ENCODE measurements at regions of chr19 and their contacts with region 1.

Region 1: DNA sequence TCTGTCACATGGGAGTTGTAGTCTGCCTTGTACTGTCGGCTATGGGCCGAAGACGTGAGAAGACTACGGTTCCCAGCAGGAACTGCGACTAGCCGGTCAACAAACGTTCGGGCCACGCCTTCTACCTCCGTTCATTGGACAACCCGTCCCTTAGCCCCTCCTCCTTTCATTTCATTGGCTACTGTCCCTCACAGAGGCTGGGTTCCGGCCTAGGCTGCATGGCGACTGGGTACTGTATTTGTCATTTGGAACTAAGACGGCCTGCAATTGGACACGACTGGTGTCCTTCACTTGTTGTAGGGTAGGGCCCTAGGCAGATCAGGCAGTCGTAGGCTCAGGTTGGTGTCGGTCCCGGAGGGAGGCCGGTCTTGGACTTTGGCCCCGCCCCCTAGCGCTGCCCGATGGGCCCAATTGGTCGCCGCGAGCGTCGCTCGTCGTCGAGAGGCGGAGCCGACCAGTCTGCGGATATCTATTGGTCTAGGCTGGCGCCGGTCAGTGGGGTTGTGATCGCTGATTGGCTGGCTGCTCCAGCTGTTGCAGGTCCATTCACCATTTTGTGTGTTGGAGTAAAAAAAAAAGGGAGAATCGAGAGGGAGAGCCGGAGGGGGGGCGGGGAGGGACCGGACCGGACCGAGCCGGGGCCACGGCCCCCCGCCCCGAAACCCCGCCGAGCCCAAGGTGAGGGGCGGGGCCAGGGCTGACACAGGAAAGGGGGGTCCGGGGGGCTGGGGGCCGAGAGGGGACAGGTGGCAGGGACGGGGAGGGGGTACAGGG is at the start of gene CIC:
- DNase-seq: peak; percentile 99 to 100
- ATAC-seq: peak; percentile 84 to 93 (median 88)
- H3K4me3 ChIP-seq: peak within 1 kb of the TSS; percentile 38 to 83 (median 66)
- H3K27ac ChIP-seq: peak within 1 kb of the TSS; percentile 90 to 99 (median 98)
- H3K4me1 ChIP-seq: peaks cover 18 to 39% (median 29%) of the 10 kb centered on the region in 9 donors
- H3K27me3 ChIP-seq: no peaks in the 10 kb centered on the region
- CTCF ChIP-seq: no peak
- total RNA-seq, gene CIC: 27.9 to 42.0 (median 32.0) TPM

Region 2: GRCh38 chr19:42254989-42255765 is 13.7 kb before region 1 on chr19 and contains the start of gene ERF:
- intact Hi-C with region 1: loop called in 5 of 10 experiments (anchors 1 to 2 kb)
- DNase-seq: peak; percentile 94 to 96
- ATAC-seq: peak; percentile 79 to 88 (median 82)
- H3K4me3 ChIP-seq: peak within 1 kb of the TSS; percentile 73 to 100 (median 98)
- H3K27ac ChIP-seq: peak within 1 kb of the TSS; percentile 96 to 100 (median 98)
- H3K4me1 ChIP-seq: peaks cover 22 to 50% (median 41%) of the 10 kb centered on the region in 9 donors
- H3K27me3 ChIP-seq: no peaks in the 10 kb centered on the region
- CTCF ChIP-seq: no peak
- total RNA-seq, gene ERF: 29.8 to 40.2 (median 32.9) TPM